ENCODE measurements at regions of chr5 and their contacts with region 1.

Region 1: GRCh38 chr5:139968547-139969261 is 74.4 kb downstream of the NRG2 start:
- DNase-seq: peak; percentile 43
- ATAC-seq: peak; percentile 97
- H3K4me3 ChIP-seq: no peak overlapping the region
- H3K27ac ChIP-seq: no peak overlapping the region
- H3K4me1 ChIP-seq: peaks cover 10% of the 10 kb centered on the region
- H3K27me3 ChIP-seq: no peaks in the 10 kb centered on the region
- CTCF ChIP-seq: peak; percentile 100; a peak in 5 of 6 replicates
- EP300 ChIP-seq: no peak
- POLR2A ChIP-seq: no peak
- RAD21 ChIP-seq: peak; percentile 97

Region 2: DNA sequence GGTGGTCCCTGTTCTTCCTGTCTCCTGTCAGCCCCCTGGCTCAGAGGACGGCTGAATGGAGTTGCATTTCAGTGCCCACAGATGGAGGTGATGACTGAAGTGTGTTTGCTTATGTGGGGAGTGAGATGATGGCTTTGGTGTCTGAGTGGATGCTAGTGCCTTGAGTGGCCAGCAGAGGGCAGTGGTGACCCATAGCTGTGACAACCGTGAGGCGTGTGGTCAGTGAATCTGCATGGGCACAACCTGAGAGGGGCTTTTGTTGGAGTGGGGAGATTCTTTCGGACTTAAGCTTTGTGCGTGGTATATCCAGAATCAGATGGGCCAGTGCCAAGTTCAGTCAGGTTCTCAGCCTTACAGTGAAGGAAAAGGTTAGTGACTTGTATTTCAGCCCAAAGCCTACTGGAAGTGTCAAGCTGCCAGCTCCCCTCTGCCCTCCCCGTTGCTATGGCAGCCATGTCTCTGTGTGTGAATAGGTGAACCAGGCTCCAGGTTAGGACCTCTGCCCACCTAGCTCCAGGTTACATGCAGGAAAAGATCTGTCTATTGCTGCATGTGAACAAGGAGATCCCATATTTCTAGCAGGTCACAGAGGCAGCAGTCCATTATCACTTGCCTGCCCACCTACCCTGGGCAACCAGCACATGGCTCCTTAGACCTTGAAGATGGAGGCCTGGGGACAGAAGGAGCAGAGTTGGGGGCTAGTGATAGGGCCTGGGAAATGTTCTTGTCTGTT is 335.2 kb before region 1 on chr5:
- CTCF ChIA-PET with region 1: interaction called, 5 read pairs
- POLR2A ChIA-PET with region 1: no interaction called
- RAD21 ChIA-PET with region 1: interaction called, 4 read pairs
- SMC1A ChIA-PET with region 1: interaction called, 3 read pairs
- in situ Hi-C with region 1: no loop called
- intact Hi-C with region 1: loop called (anchors 10 kb)
- DNase-seq: no peak
- ATAC-seq: peak; percentile 44
- H3K4me3 ChIP-seq: no peak overlapping the region
- H3K27ac ChIP-seq: no peak overlapping the region
- H3K4me1 ChIP-seq: peaks cover 55% of the 10 kb centered on the region
- H3K27me3 ChIP-seq: no peaks in the 10 kb centered on the region
- CTCF ChIP-seq: peak; percentile 99; a peak in 5 of 6 replicates
- EP300 ChIP-seq: no peak
- POLR2A ChIP-seq: peak; percentile 72
- RAD21 ChIP-seq: peak; percentile 91

Region 3: DNA sequence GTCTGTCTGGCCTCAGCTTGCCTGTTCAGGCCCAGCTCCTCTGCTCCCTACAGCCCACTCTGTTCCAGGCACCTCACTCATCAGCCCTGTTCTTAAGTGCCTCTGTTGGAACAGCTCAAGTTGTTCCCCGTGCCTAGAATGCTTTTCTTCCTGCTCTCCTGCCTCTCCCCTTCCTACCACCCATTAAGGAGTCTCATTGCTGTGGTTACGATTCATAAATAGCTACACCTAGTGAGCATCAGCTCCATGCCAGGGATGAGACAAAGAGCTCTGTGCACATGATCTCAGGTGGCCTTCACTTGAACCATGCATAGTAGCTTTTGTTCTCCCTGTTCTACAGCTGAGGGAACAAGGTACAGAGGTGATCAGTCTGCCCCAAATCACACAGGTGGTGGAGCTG is 118.8 kb before region 1 on chr5:
- CTCF ChIA-PET with region 1: interaction called, 85 read pairs
- POLR2A ChIA-PET with region 1: no interaction called
- RAD21 ChIA-PET with region 1: interaction called, 8 read pairs
- SMC1A ChIA-PET with region 1: interaction called, 14 read pairs
- in situ Hi-C with region 1: no loop called
- intact Hi-C with region 1: no loop called
- DNase-seq: no peak
- ATAC-seq: no peak
- H3K4me3 ChIP-seq: no peak overlapping the region
- H3K27ac ChIP-seq: no peak overlapping the region
- H3K4me1 ChIP-seq: no peaks in the 10 kb centered on the region
- H3K27me3 ChIP-seq: no peaks in the 10 kb centered on the region; a peak in 1 of 4 replicates
- CTCF ChIP-seq: no peak
- EP300 ChIP-seq: no peak
- POLR2A ChIP-seq: no peak
- RAD21 ChIP-seq: no peak

Region 4: GRCh38 chr5:139893873-139894272 is 74.8 kb before region 1 on chr5:
- CTCF ChIA-PET with region 1: interaction called, 50 read pairs
- POLR2A ChIA-PET with region 1: no interaction called
- RAD21 ChIA-PET with region 1: interaction called, 3 read pairs
- SMC1A ChIA-PET with region 1: interaction called, 10 read pairs
- in situ Hi-C with region 1: no loop called
- intact Hi-C with region 1: no loop called
- DNase-seq: no peak
- ATAC-seq: no peak
- H3K4me3 ChIP-seq: no peak overlapping the region
- H3K27ac ChIP-seq: no peak overlapping the region
- H3K4me1 ChIP-seq: no peaks in the 10 kb centered on the region
- H3K27me3 ChIP-seq: no peaks in the 10 kb centered on the region
- CTCF ChIP-seq: no peak
- EP300 ChIP-seq: no peak
- POLR2A ChIP-seq: no peak
- RAD21 ChIP-seq: no peak

Region 5: DNA sequence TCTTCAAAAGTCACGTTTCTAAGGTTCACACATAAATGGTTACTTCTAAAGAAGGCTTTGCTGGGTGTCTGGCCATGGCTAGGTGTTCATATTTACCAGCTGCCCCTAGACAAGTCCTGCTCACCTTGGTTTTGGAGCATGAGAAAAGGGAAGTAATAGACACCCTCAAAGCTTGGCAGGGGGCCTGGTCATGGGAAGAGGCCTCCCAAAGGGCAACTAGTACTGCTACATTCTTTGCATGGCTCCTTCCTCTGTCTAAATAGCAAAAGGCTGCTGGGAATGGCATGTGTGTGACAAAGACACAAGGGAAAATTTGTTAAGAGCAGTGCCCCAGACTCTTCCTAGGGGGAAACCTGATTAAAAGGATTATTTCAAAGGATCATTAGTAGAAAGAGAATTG is 19.0 kb before region 1 on chr5:
- CTCF ChIA-PET with region 1: interaction called, 74 read pairs
- POLR2A ChIA-PET with region 1: interaction called, 3 read pairs
- RAD21 ChIA-PET with region 1: interaction called, 6 read pairs
- SMC1A ChIA-PET with region 1: interaction called, 25 read pairs
- in situ Hi-C with region 1: no loop called
- intact Hi-C with region 1: no loop called
- DNase-seq: no peak
- ATAC-seq: no peak
- H3K4me3 ChIP-seq: no peak overlapping the region
- H3K27ac ChIP-seq: no peak overlapping the region
- H3K4me1 ChIP-seq: peaks cover 21% of the 10 kb centered on the region
- H3K27me3 ChIP-seq: no peaks in the 10 kb centered on the region
- CTCF ChIP-seq: no peak
- EP300 ChIP-seq: no peak
- POLR2A ChIP-seq: no peak
- RAD21 ChIP-seq: no peak

Region 6: DNA sequence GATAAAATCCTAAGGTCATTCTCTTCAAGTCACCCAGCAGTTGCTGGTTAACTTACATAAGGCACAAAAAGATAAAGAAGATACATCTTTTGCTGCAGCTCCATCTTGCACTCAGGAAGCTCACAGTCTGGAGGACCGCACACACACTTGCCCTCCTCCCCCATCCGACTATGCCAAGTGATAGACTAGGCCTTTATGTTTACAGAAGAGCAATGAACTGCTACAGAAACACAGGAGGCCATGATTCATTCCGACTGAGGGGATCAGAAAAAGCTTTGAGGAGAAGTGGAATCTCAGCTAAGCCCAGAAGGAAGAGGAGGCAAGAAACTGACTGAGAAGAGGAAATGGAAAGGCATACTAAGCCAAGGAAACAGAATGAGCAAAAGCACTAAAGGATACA is 57.0 kb after region 1 on chr5:
- CTCF ChIA-PET with region 1: interaction called, 10 read pairs
- POLR2A ChIA-PET with region 1: no interaction called
- RAD21 ChIA-PET with region 1: interaction called, 6 read pairs
- SMC1A ChIA-PET with region 1: interaction called, 6 read pairs
- in situ Hi-C with region 1: no loop called
- intact Hi-C with region 1: no loop called
- DNase-seq: no peak
- ATAC-seq: no peak
- H3K4me3 ChIP-seq: no peak overlapping the region
- H3K27ac ChIP-seq: no peak overlapping the region
- H3K4me1 ChIP-seq: no peaks in the 10 kb centered on the region
- H3K27me3 ChIP-seq: no peaks in the 10 kb centered on the region
- CTCF ChIP-seq: no peak
- EP300 ChIP-seq: no peak
- POLR2A ChIP-seq: no peak
- RAD21 ChIP-seq: no peak

Region 7: GRCh38 chr5:140093179-140093578 is 124.5 kb after region 1 on chr5:
- CTCF ChIA-PET with region 1: no interaction called
- POLR2A ChIA-PET with region 1: no interaction called
- RAD21 ChIA-PET with region 1: no interaction called
- SMC1A ChIA-PET with region 1: no interaction called
- in situ Hi-C with region 1: no loop called
- intact Hi-C with region 1: no loop called
- DNase-seq: no peak
- ATAC-seq: no peak; the same call in 2 of the 3 replicates
- H3K4me3 ChIP-seq: no peak overlapping the region
- H3K27ac ChIP-seq: no peak overlapping the region
- H3K4me1 ChIP-seq: no peaks in the 10 kb centered on the region
- H3K27me3 ChIP-seq: no peaks in the 10 kb centered on the region; a peak in 1 of 4 replicates
- CTCF ChIP-seq: no peak
- EP300 ChIP-seq: no peak
- POLR2A ChIP-seq: no peak
- RAD21 ChIP-seq: no peak

Region 8: DNA sequence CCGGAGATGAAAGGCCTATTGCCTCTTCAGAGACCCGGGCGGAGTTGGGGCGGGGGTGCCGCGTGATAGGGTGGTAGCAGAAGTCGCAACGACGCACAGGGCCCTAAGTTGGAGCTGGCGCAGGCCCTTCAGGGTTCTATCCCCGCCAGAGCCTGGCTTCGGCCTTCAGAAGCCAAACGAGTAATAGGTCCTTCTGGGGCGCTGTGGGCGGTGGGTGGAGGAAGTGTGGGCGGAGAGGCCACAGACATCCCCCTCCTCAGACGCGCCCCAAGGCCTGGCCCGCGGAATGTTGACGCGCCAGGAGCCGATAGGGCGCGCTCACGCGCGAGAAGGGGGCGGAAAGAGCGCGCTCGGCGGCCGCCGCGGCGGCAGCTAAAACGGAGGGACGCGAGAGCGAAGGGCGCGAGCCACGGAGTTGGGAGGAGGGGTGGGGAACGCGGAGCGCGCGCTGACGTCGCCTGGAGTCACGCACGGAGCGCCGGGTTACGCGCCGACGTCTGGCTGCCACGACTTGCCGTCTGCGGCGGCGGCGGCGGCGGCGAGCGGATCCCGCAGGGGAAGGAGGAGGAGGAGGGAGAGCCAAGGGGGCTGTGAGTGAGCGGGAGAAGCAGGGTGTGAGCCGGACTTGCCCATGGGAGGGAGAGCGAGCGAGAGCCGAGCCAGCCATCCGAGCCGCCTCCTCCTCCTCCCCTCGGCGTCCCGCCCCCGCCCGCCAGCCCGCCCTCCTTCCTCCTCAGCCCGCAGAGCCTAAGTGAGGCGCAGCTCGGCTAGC is 138.8 kb after region 1 on chr5:
- CTCF ChIA-PET with region 1: interaction called, 21 read pairs
- POLR2A ChIA-PET with region 1: no interaction called
- RAD21 ChIA-PET with region 1: interaction called, 5 read pairs
- SMC1A ChIA-PET with region 1: interaction called, 5 read pairs
- in situ Hi-C with region 1: no loop called
- intact Hi-C with region 1: no loop called
- DNase-seq: peak; percentile 68
- ATAC-seq: peak; percentile 89
- H3K4me3 ChIP-seq: peak overlapping the region; percentile 86
- H3K27ac ChIP-seq: peak overlapping the region; percentile 67
- H3K4me1 ChIP-seq: peaks cover 20% of the 10 kb centered on the region
- H3K27me3 ChIP-seq: no peaks in the 10 kb centered on the region
- CTCF ChIP-seq: peak; percentile 6 to 29 (median 27); a peak in 3 of 6 replicates
- EP300 ChIP-seq: no peak
- POLR2A ChIP-seq: peak; percentile 86
- RAD21 ChIP-seq: no peak